Mammary epithelial cell (primary cell): ENCODE measurements at regions of chr21 and their contacts with region 1.

Region 1: DNA sequence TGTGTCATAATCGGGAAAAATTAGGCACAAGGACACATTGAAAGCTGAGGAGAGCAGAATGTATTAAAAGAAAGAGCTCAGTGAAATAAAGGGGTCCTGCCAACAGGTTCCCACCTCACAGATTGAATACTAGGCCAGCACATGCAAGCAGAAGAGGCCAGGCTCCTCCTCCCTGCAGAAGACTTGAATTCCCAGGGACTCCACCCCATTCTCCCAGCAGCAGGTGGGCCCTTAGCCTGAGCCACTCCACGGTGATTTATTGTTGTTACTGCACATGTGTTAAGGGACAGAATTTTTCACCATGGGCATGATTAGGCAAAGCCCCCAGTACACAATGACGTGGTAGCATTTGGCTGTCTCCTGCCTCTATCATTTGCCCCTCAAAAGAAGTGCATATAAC is 1844.7 kb downstream of the NCAM2 start:
- DNase-seq: no peak
- H3K4me3 ChIP-seq: no peak overlapping the region
- H3K27ac ChIP-seq: no peak overlapping the region
- H3K4me1 ChIP-seq: no peaks in the 10 kb centered on the region
- H3K27me3 ChIP-seq: no peaks in the 10 kb centered on the region
- CTCF ChIP-seq: no peak

Region 2: DNA sequence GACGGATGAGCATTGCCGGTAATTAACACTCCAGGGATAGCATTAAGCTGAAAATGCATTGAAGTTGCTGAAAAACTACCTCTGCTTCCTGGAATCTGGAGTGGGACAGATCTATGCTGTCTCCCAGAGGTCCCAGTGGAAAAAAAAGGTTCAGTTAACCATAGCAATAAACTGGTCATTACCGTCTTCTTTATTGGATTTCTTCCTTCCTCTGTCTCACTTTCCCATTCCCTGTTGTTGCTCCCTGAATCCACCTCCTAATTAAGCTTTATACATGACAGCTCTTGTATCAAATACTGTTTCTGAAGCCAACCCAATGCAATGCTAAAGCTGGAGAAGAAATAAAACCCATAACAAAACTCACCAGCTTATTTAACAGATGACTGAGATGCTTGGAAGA is 38.7 kb before region 1 on chr21:
- CTCF ChIA-PET with region 1: no interaction called
- dilution Hi-C with region 1: loop called (anchors 5 kb)
- in situ Hi-C with region 1: no loop called
- intact Hi-C with region 1: no loop called
- DNase-seq: no peak
- H3K4me3 ChIP-seq: no peak overlapping the region
- H3K27ac ChIP-seq: no peak overlapping the region
- H3K4me1 ChIP-seq: no peaks in the 10 kb centered on the region
- H3K27me3 ChIP-seq: no peaks in the 10 kb centered on the region
- CTCF ChIP-seq: no peak

Region 3: GRCh38 chr21:22885079-22885478 is 42.2 kb after region 1 on chr21:
- CTCF ChIA-PET with region 1: no interaction called
- dilution Hi-C with region 1: no loop called
- in situ Hi-C with region 1: no loop called
- intact Hi-C with region 1: no loop called
- DNase-seq: no peak
- H3K4me3 ChIP-seq: no peak overlapping the region
- H3K27ac ChIP-seq: no peak overlapping the region
- H3K4me1 ChIP-seq: no peaks in the 10 kb centered on the region
- H3K27me3 ChIP-seq: no peaks in the 10 kb centered on the region
- CTCF ChIP-seq: no peak

Region 4: GRCh38 chr21:22900511-22900910 is 57.6 kb after region 1 on chr21:
- CTCF ChIA-PET with region 1: no interaction called
- dilution Hi-C with region 1: no loop called
- in situ Hi-C with region 1: no loop called
- intact Hi-C with region 1: no loop called
- DNase-seq: no peak
- H3K4me3 ChIP-seq: no peak overlapping the region
- H3K27ac ChIP-seq: no peak overlapping the region
- H3K4me1 ChIP-seq: no peaks in the 10 kb centered on the region
- H3K27me3 ChIP-seq: no peaks in the 10 kb centered on the region
- CTCF ChIP-seq: no peak